ENCODE measurements at regions of chr2 and their contacts with region 1.

Region 1: GRCh38 chr2:233053928-233054784 is 6.0 kb upstream of the INPP5D start:
- DNase-seq: peak; percentile 41 to 94
- H3K4me3 ChIP-seq: no peak overlapping the region
- H3K27ac ChIP-seq: no peak overlapping the region
- H3K4me1 ChIP-seq: peaks cover 10 to 16% (median 14%) of the 10 kb centered on the region in 4 experiments
- H3K27me3 ChIP-seq: no peaks in the 10 kb centered on the region; a peak in 1 of 7 replicates
- CTCF ChIP-seq: peak; percentile 92 to 94 (median 93)
- EP300 ChIP-seq: no peak
- POLR2A ChIP-seq: no peak
- RAD21 ChIP-seq: peak; percentile 77 to 89

Region 2: GRCh38 chr2:232871835-232872736 is 182.1 kb before region 1 on chr2:
- CTCF ChIA-PET with region 1: interaction called, 13 read pairs
- POLR2A ChIA-PET with region 1: no interaction called
- DNase-seq: no peak
- H3K4me3 ChIP-seq: no peak overlapping the region
- H3K27ac ChIP-seq: no peak overlapping the region
- H3K4me1 ChIP-seq: peaks cover 0 to 3% (median 1%) of the 10 kb centered on the region in 4 experiments; a peak in 4 of 7 replicates
- H3K27me3 ChIP-seq: peaks cover 0 to 16% (median 11%) of the 10 kb centered on the region in 4 experiments; a peak in 5 of 7 replicates
- CTCF ChIP-seq: no peak
- EP300 ChIP-seq: no peak
- POLR2A ChIP-seq: no peak
- RAD21 ChIP-seq: no peak

Region 3: GRCh38 chr2:232979871-232980461 is 74.2 kb before region 1 on chr2:
- CTCF ChIA-PET with region 1: interaction called, 26 read pairs
- POLR2A ChIA-PET with region 1: interaction called, 3 read pairs
- DNase-seq: no peak
- H3K4me3 ChIP-seq: no peak overlapping the region
- H3K27ac ChIP-seq: no peak overlapping the region
- H3K4me1 ChIP-seq: peaks cover 0 to 14% (median 7%) of the 10 kb centered on the region in 4 experiments; a peak in 5 of 7 replicates
- H3K27me3 ChIP-seq: no peaks in the 10 kb centered on the region; a peak in 1 of 7 replicates
- CTCF ChIP-seq: no peak
- EP300 ChIP-seq: no peak
- POLR2A ChIP-seq: no peak
- RAD21 ChIP-seq: peak in 1 of 2 experiments; percentile 34; a peak in 2 of 4 replicates

Region 4: GRCh38 chr2:233026192-233026813 is 27.9 kb before region 1 on chr2:
- CTCF ChIA-PET with region 1: interaction called, 47 read pairs
- POLR2A ChIA-PET with region 1: interaction called, 3 read pairs
- DNase-seq: no peak
- H3K4me3 ChIP-seq: no peak overlapping the region
- H3K27ac ChIP-seq: no peak overlapping the region
- H3K4me1 ChIP-seq: no peaks in the 10 kb centered on the region
- H3K27me3 ChIP-seq: no peaks in the 10 kb centered on the region
- CTCF ChIP-seq: no peak
- EP300 ChIP-seq: no peak
- POLR2A ChIP-seq: no peak
- RAD21 ChIP-seq: no peak

Region 5: GRCh38 chr2:233075966-233076339 is 21.8 kb after region 1 on chr2:
- CTCF ChIA-PET with region 1: interaction called, 10 read pairs
- POLR2A ChIA-PET with region 1: no interaction called
- DNase-seq: no peak
- H3K4me3 ChIP-seq: no peak overlapping the region; a peak in 1 of 8 replicates
- H3K27ac ChIP-seq: no peak overlapping the region
- H3K4me1 ChIP-seq: peaks cover 5 to 17% (median 10%) of the 10 kb centered on the region in 4 experiments
- H3K27me3 ChIP-seq: no peaks in the 10 kb centered on the region
- CTCF ChIP-seq: no peak
- EP300 ChIP-seq: no peak
- POLR2A ChIP-seq: no peak
- RAD21 ChIP-seq: no peak

Region 6: DNA sequence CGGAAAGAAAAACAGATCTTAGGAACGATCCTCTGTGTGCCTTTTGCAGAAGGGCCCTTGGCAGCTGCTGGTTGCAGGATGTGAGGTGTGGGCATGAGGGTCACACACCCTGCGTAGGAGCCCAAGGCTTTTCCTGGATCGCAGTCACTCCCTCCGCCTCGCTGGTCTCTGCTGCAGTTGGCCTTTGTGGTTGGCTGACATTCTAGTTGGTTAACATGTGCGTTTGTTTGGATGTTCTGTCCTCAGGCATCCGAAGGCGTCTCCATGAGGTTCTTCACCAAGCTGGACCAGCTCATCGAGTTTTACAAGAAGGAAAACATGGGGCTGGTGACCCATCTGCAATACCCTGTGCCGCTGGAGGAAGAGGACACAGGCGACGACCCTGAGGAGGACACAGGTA is 67.7 kb after region 1 on chr2:
- CTCF ChIA-PET with region 1: no interaction called
- POLR2A ChIA-PET with region 1: no interaction called
- DNase-seq: no peak
- H3K4me3 ChIP-seq: no peak overlapping the region
- H3K27ac ChIP-seq: no peak overlapping the region
- H3K4me1 ChIP-seq: peaks cover 0 to 11% (median 1%) of the 10 kb centered on the region in 4 experiments; a peak in 3 of 7 replicates
- H3K27me3 ChIP-seq: no peaks in the 10 kb centered on the region
- CTCF ChIP-seq: no peak
- EP300 ChIP-seq: no peak
- POLR2A ChIP-seq: no peak
- RAD21 ChIP-seq: no peak

Region 7: DNA sequence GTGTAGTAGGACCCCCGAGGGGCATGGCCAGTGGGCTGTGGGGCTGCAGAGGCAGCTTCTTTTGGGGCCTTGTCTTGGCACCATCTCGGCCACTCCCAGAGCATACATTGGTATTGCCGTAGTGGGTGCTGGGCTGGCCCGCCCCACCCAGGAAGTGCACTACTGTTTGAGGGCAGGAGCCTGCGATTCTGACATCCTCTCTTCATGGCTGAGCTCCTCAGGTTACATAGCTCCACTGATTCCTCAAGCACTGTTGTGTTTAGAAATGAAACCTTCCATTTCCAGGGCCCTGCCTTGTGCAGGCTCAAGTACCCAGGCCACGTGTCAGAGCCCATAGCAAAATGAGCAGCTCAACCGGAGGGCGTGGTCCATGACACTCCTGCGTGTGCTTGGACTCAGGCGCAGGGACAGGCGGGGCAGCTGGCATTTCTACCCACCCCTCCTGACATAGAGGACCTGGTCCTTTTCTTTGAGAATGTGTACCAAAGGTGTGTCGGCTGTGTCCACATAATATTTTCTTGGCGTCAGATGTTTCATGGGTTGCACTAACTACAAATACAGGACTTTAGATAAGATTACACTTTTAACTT is 368.0 kb after region 1 on chr2:
- CTCF ChIA-PET with region 1: no interaction called
- POLR2A ChIA-PET with region 1: no interaction called
- DNase-seq: peak in 1 of 2 experiments; percentile 42
- H3K4me3 ChIP-seq: no peak overlapping the region
- H3K27ac ChIP-seq: no peak overlapping the region
- H3K4me1 ChIP-seq: peaks cover 0 to 11% (median 6%) of the 10 kb centered on the region in 4 experiments; a peak in 6 of 7 replicates
- H3K27me3 ChIP-seq: no peaks in the 10 kb centered on the region
- CTCF ChIP-seq: no peak
- EP300 ChIP-seq: no peak
- POLR2A ChIP-seq: no peak
- RAD21 ChIP-seq: no peak

Measured in H1 (cell line).